Colonic mucosa (tissue), 4 donors: ENCODE measurements at regions of chr5 and their contacts with region 1.

Region 1: DNA sequence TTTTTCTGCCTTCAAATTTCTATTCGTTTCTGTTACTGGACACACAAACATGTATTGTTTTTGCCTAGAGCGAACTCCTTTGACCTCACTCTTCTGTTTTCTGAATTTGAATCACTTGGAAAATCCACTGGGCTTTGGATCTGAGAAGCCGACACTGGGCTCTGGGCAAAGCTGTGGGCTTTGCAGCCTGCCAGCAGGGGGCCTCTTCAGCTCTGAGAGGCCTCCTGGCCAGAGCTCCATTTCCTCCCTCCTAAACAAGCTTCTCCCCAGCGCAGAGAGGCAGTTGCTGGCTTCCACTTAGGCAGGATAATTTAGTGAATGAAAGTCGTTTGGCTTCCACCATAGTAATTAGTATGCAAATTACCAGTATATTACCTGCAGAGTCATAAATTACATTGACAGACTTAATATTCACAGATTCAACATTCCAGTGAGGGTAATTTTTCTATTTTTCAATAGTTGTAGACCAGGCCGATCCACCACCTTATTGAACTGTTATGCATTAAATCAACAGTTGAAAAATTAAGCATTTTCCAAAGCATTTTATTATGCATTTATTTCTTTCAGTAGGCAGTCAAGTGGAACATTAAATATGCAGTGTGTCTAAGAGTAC is 104.0 kb upstream of the ZNF366 start:
- DNase-seq: peak; percentile 78
- H3K4me3 ChIP-seq: no peak overlapping the region
- H3K27ac ChIP-seq: no peak overlapping the region
- H3K4me1 ChIP-seq: no peaks in the 10 kb centered on the region
- H3K27me3 ChIP-seq: no peaks in the 10 kb centered on the region
- CTCF ChIP-seq: peak; percentile 87

Region 2: DNA sequence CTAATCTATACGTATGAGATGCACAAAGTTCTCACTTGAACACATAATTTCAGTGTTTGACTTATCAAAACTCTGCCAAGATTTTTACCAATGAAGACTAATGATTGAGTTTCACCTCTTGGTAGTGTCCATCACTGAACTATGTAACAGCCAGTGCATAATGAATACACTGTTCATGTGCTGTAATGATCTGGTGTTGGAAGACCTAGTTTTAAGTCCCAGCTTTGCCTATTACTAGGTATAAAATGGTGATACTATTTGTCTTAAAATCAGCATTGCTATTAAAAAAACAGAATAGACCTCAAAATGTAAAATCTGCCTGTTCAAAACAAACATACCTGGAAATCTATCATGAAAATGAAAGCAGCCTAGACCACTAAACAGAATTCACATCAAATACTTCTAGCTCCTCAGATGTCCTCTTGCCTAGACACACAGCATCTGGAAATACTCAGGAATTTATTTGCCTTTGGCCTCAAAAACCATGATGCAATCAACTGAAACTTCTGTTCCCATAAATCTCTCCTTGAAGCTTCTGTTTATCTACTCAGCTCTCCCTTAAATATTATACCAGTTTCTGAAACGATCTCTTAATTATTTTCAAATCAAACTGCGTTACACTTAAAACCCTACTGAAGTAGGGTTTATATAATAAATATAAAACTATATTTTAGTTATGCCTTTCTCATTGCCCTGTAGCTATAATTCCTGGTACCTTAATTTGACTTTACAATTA is 329.3 kb before region 1 on chr5:
- intact Hi-C with region 1: no loop called
- DNase-seq: no peak
- H3K4me3 ChIP-seq: no peak overlapping the region
- H3K27ac ChIP-seq: no peak overlapping the region
- H3K4me1 ChIP-seq: no peaks in the 10 kb centered on the region
- H3K27me3 ChIP-seq: no peaks in the 10 kb centered on the region
- CTCF ChIP-seq: no peak

Region 3: GRCh38 chr5:72816311-72817145 is 205.3 kb after region 1 on chr5 and contains the start of gene TNPO1:
- intact Hi-C with region 1: loop called (anchors 5 kb)
- DNase-seq: peak; percentile 94
- H3K4me3 ChIP-seq: peak within 1 kb of the TSS; percentile 65
- H3K27ac ChIP-seq: peak within 1 kb of the TSS; percentile 97
- H3K4me1 ChIP-seq: peaks cover 9% of the 10 kb centered on the region
- H3K27me3 ChIP-seq: no peaks in the 10 kb centered on the region
- CTCF ChIP-seq: no peak
- total RNA-seq, gene TNPO1: 78.0 to 89.9 TPM